Heart right ventricle (tissue), 16 donors: ENCODE measurements at regions of chr2 and their contacts with region 1.

Region 1: DNA sequence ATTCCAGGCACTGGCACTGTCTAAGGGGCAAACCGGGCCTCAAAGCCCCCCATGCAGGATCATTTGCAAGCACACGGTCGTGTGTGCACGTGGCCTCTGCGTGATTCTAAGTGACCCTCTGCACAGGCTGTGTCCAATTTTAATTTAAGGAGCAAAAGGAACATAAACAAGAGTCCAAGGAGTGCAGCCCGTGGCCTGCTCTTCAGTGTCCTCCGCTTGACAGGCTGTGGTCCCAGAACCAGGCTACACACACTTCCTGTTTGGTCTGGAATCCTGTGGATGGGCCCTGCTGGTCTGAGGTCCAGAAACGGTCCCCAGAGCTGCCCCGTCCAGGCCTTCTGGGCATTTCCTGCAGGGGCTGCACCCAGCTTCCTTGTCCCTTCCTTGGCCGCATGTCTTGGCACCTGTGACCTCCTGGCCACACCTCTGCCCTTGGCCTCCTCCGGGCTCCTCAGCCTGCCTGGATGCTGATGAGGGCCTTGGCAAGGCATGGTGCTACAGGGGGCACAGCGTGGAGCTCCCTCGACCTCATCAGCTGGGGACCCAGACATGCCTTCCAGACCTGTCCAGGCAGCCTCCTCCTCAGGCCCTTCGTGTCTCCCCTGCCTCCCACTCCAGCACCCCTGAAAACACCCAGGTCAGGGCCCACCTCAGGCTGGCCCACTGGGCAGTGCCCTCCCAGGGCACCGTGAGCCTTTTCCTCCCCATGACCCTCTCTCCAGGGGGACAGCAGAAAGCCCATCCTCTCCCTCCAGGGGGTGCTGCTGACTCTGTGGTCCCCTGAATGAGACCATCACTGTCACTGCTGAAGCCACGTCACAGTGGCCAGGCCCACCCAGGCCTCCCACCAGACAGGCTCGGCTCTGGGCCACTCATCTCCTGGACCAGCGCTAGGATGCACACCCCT is 136.4 kb upstream of the GPC1 start:
- DNase-seq: no peak
- ATAC-seq: peak in 1 of 8 donors; percentile 2
- H3K4me3 ChIP-seq: no peak overlapping the region
- H3K27ac ChIP-seq: no peak overlapping the region
- H3K4me1 ChIP-seq: peaks cover 0 to 36% (median 9%) of the 10 kb centered on the region in 9 donors
- H3K27me3 ChIP-seq: no peaks in the 10 kb centered on the region
- CTCF ChIP-seq: no peak

Region 2: GRCh38 chr2:240259201-240259923 is 39.7 kb before region 1 on chr2:
- intact Hi-C with region 1: loop called in 1 of 10 experiments (anchors 2 kb)
- DNase-seq: peak; percentile 78 to 83
- ATAC-seq: peak; percentile 87 to 96 (median 92)
- H3K4me3 ChIP-seq: no peak overlapping the region
- H3K27ac ChIP-seq: peak overlapping the region; percentile 86 to 98 (median 93)
- H3K4me1 ChIP-seq: peaks cover 6 to 38% (median 21%) of the 10 kb centered on the region in 9 donors
- H3K27me3 ChIP-seq: no peaks in the 10 kb centered on the region
- CTCF ChIP-seq: peak in 4 of 9 donors; percentile 8 to 44 (median 37)

Region 3: GRCh38 chr2:240348522-240348921 is 49.5 kb after region 1 on chr2:
- intact Hi-C with region 1: no loop called
- DNase-seq: no peak
- ATAC-seq: no peak
- H3K4me3 ChIP-seq: no peak overlapping the region
- H3K27ac ChIP-seq: no peak overlapping the region
- H3K4me1 ChIP-seq: peaks cover 0 to 31% (median 0%) of the 10 kb centered on the region in 9 donors
- H3K27me3 ChIP-seq: peaks cover 0 to 7% (median 0%) of the 10 kb centered on the region in 7 donors
- CTCF ChIP-seq: no peak

Region 4: GRCh38 chr2:240387669-240388358 is 88.8 kb after region 1 on chr2:
- intact Hi-C with region 1: no loop called
- DNase-seq: peak; percentile 60 to 77
- ATAC-seq: peak; percentile 25 to 77 (median 64)
- H3K4me3 ChIP-seq: no peak overlapping the region
- H3K27ac ChIP-seq: peak overlapping the region in 2 of 10 donors; percentile 28 to 53
- H3K4me1 ChIP-seq: peaks cover 0 to 13% (median 9%) of the 10 kb centered on the region in 9 donors
- H3K27me3 ChIP-seq: no peaks in the 10 kb centered on the region
- CTCF ChIP-seq: no peak